Aorta (tissue), 5 donors: ENCODE measurements at regions of chr3 and their contacts with region 1.

Region 1: GRCh38 chr3:196969660-196970546 is 1.3 kb upstream of the PIGZ start:
- DNase-seq: peak; percentile 74 to 92
- ATAC-seq: peak; percentile 87
- H3K4me3 ChIP-seq: peak overlapping the region; percentile 78 to 92
- H3K27ac ChIP-seq: no peak overlapping the region
- H3K4me1 ChIP-seq: no peaks in the 10 kb centered on the region
- H3K27me3 ChIP-seq: no peaks in the 10 kb centered on the region

Region 2: DNA sequence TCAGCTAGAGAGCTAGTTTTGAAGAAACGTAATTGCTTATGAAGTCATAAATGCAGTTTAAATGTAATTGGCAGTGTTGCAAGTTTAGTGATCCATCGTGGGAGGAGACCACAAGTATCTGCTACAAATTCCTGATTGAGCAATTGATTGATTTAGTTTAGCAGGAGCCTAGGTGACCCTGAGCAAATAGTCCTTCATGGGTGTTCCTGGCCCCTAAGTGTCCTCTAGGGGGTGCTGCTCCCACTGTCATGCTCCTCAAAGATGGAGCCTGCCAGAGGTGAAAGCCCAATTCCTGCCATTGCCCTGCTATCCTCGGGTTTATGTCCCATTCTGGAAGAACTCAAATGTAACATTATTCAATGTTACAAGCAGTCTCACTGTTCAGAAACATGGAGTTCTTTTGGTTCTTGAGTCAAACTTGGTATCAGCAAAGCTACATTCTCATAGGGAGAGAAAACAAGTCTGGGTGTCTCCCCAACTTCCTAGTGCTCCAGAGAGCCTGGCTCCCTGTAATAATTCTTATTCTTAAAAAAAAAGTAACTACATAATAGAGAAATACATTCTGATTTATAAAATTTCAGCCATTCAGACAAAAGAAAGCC is 132.0 kb before region 1 on chr3:
- intact Hi-C with region 1: loop called in 1 of 2 experiments (anchors 2 kb)
- DNase-seq: peak; percentile 76 to 78
- ATAC-seq: no peak
- H3K4me3 ChIP-seq: no peak overlapping the region
- H3K27ac ChIP-seq: no peak overlapping the region
- H3K4me1 ChIP-seq: no peaks in the 10 kb centered on the region
- H3K27me3 ChIP-seq: no peaks in the 10 kb centered on the region